ENCODE measurements at regions of chr1 and their contacts with region 1.

Region 1: DNA sequence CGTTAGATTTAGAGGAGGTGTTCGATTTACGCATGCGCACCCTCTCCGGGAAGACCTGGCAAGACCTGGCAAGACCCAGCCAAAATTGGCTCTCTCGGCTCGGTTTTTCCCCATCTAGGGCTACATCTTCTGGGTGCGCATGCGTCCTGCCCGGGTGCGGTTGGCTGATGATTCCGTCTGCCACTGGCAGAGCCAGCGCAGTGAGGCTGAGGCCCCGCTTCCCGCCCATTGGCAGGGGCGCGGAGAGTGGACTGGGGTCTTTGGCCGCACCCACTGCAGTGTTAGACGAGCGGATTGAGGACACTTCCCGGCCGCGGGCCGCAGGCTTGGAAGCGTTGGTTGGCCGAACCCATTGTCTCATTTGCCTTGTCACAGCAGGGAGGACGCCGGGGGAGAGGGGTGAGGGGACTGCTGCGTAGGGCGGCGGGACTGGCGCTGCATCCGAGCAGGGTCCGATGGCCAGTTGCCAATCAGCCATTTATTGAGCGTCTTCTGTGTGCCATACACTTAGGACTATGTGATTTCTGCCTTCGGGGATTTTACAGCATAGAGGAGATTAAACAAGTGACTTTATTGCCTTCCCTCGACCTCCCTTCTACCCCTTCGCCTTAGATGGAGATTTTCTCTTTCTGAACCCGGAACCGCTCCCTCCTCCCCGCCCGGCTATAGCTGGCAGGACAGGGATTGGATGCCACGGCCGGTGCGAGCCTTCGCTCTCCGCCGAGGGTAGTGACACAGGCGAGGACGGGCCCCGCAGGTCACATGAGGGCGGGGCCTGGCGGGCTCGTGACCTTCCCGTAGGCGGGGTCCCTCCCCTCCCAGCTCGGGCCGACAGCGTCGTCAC is 43.7 kb downstream of the MEF2D start:
- DNase-seq: peak; percentile 96 to 98
- ATAC-seq: peak; percentile 93 to 96 (median 95)
- H3K4me3 ChIP-seq: peak overlapping the region; percentile 26 to 71 (median 64)
- H3K27ac ChIP-seq: peak overlapping the region; percentile 95 to 100 (median 99)
- H3K4me1 ChIP-seq: peaks cover 0 to 26% (median 11%) of the 10 kb centered on the region in 9 donors
- H3K27me3 ChIP-seq: no peaks in the 10 kb centered on the region
- CTCF ChIP-seq: no peak

Region 2: DNA sequence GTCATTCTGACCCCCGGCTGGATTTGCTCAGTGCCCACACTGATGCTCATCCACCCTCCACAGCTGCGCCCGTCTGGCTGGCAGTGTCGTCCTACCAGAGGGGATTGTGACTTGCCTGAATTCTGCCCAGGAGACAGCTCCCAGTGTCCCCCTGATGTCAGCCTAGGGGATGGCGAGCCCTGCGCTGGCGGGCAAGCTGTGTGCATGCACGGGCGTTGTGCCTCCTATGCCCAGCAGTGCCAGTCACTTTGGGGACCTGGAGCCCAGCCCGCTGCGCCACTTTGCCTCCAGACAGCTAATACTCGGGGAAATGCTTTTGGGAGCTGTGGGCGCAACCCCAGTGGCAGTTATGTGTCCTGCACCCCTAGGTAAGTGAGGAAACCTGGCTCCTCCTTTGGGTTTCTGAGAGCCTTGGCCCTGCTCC is 1399.0 kb before region 1 on chr1:
- intact Hi-C with region 1: loop called in 1 of 10 experiments (anchors 5 kb)
- DNase-seq: no peak
- ATAC-seq: no peak
- H3K4me3 ChIP-seq: no peak overlapping the region
- H3K27ac ChIP-seq: no peak overlapping the region
- H3K4me1 ChIP-seq: peaks cover 14 to 50% (median 28%) of the 10 kb centered on the region in 9 donors
- H3K27me3 ChIP-seq: no peaks in the 10 kb centered on the region
- CTCF ChIP-seq: no peak

Region 3: DNA sequence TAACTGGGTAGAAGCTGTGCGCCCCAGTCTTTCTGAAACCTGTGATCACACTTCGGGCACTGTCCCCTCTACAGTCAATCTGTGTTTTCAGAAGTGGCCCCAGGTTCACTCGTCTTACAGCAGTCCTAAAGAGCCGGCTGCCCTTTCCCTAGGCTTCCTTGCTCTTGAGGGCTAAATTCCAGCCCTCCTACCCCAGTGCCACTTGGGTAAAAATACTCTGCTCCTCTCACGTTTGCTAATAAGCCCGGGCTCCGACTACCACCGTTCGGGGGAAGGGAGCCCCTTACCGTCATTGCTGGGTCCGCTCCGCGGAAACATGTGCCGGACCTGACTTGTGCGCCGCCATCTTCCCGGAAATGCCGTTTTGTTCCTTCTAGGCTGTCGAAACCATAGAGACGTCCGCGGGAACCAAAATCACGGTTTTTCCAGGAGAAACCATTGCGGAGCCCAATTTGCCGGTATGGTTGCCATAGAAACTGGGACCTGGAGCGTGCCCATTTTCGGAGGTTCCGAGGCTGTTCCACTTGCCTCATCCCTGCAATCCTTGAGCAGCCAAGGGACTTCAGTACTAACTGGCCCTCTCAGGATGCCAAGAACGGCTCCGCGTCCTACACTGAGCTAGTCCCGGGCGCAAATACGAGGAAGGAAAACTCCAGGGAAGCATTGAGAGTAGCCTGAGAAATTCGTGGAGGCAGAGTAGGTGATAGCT is 144.4 kb after region 1 on chr1 and contains the start of gene GPATCH4:
- intact Hi-C with region 1: loop called in 6 of 10 experiments (anchors 2 to 5 kb)
- DNase-seq: peak; percentile 59 to 84
- ATAC-seq: peak; percentile 78 to 92 (median 87)
- H3K4me3 ChIP-seq: peak within 1 kb of the TSS; percentile 34 to 85 (median 70)
- H3K27ac ChIP-seq: peak within 1 kb of the TSS in 9 of 10 donors; percentile 57 to 84 (median 80)
- H3K4me1 ChIP-seq: peaks cover 7 to 25% (median 15%) of the 10 kb centered on the region in 9 donors
- H3K27me3 ChIP-seq: no peaks in the 10 kb centered on the region
- CTCF ChIP-seq: no peak
- total RNA-seq, gene GPATCH4: 9.3 to 25.4 (median 13.3) TPM

Region 4: GRCh38 chr1:156608036-156608674 is 151.3 kb after region 1 on chr1:
- intact Hi-C with region 1: loop called (anchors 1 to 10 kb)
- DNase-seq: peak in 1 of 2 donors; percentile 70
- ATAC-seq: peak; percentile 84 to 96 (median 93)
- H3K4me3 ChIP-seq: no peak overlapping the region
- H3K27ac ChIP-seq: no peak overlapping the region
- H3K4me1 ChIP-seq: peaks cover 0 to 9% (median 0%) of the 10 kb centered on the region in 9 donors
- H3K27me3 ChIP-seq: peaks cover 0 to 22% (median 0%) of the 10 kb centered on the region in 7 donors
- CTCF ChIP-seq: peak; percentile 64 to 86 (median 78)

Region 5: DNA sequence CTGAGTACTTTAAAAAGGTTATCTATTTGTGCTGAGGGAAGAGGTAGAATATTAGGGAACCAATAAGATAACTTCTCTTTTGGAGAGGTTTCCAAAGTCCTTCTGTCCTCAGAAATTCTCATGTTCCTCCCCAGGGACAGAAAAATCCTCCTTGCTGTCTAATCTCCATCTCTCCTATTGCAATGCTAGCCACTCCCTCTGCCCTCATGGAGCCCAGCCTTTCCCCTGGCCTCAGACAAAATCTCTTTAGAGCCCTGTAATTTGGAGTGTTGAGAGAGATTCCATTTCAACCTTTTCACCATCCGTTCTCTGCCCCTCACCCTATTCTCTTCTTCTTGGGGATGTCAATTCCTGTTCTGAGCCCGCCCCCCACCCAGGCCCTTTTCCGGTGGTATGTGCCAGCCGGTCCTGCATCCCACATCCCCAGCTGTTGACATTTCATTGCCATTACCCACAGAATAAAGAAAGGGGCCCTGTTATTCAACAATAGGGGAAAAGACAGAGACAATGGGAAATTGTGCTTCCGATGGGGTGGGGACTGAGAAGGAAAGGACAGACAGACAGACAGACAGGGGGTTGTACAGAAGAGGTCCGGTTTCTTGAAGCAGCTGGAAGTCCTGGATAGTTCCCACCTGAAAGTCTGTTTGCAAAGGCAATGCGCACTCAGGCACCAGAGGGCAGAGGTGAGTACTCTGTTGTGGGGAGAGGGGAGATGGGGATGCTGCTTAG is 162.2 kb after region 1 on chr1 and contains the start of gene HAPLN2:
- intact Hi-C with region 1: loop called in 2 of 10 experiments (anchors 5 to 10 kb)
- DNase-seq: no peak
- ATAC-seq: no peak
- H3K4me3 ChIP-seq: no peak within 1 kb of the TSS
- H3K27ac ChIP-seq: no peak within 1 kb of the TSS
- H3K4me1 ChIP-seq: peaks cover 10 to 36% (median 26%) of the 10 kb centered on the region in 9 donors
- H3K27me3 ChIP-seq: peaks cover 5 to 59% (median 8%) of the 10 kb centered on the region in 7 donors
- CTCF ChIP-seq: peak in 6 of 9 donors; percentile 18 to 42 (median 28)
- total RNA-seq, gene HAPLN2: 0.24 to 1.7 (median 0.77) TPM in 9 of 10 donors, not detected in the other

Region 6: DNA sequence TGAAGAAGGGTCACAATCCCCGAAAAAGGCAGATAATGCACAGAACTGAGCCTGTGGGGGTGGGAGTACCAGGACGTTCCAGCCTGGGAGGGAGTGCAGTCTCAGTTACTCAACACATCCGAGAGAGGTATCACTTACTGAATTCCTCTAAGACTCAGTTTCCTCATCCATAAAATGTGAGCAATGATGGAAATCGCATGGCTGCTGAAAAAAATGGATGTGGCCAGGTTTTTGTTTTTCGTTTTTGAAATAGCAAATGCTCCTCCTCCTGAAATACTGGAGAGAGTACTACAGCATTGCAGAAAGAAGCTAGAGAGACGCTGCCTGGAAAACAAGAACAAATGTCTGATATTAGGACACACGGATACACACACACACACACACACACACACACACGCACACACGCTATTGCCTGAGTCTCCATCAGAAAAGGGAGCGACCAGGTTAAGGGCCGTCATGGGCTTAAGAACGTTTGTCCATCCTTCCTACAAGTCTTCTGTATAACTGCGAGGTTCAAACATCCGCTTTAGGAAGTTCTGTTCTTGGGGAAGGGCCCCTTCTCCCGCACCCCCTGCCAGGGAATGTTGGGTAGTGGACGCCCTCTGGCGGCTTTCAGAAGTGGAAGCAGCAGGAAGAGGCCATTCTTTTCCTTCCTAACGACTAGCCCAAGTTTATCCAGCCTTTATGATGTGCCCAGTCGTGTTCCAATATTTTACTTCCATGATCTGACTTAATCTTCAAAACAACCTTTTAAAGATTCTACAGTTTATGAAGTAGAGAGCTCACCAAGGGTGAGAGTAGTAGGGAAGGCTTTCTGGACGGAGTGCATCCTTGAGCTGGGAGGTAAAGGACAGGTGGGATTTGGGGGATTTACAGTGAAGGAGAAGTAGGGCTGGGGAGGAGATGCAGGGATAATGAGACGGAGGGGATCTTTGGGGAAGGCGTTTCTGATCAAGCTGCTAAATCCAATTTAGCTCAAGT is 221.1 kb after region 1 on chr1:
- intact Hi-C with region 1: loop called in 1 of 10 experiments (anchors 5 kb)
- DNase-seq: peak; percentile 68 to 87
- ATAC-seq: peak; percentile 53 to 83 (median 70)
- H3K4me3 ChIP-seq: peak overlapping the region; percentile 61 to 94 (median 84)
- H3K27ac ChIP-seq: peak overlapping the region; percentile 68 to 99 (median 92)
- H3K4me1 ChIP-seq: peaks cover 23 to 53% (median 42%) of the 10 kb centered on the region in 9 donors
- H3K27me3 ChIP-seq: peaks cover 0 to 68% (median 0%) of the 10 kb centered on the region in 7 donors
- CTCF ChIP-seq: peak; percentile 76 to 95 (median 89)

Measured in heart right ventricle (tissue), 16 donors.